ENCODE measurements at regions of chr1 and their contacts with region 1.

Region 1: DNA sequence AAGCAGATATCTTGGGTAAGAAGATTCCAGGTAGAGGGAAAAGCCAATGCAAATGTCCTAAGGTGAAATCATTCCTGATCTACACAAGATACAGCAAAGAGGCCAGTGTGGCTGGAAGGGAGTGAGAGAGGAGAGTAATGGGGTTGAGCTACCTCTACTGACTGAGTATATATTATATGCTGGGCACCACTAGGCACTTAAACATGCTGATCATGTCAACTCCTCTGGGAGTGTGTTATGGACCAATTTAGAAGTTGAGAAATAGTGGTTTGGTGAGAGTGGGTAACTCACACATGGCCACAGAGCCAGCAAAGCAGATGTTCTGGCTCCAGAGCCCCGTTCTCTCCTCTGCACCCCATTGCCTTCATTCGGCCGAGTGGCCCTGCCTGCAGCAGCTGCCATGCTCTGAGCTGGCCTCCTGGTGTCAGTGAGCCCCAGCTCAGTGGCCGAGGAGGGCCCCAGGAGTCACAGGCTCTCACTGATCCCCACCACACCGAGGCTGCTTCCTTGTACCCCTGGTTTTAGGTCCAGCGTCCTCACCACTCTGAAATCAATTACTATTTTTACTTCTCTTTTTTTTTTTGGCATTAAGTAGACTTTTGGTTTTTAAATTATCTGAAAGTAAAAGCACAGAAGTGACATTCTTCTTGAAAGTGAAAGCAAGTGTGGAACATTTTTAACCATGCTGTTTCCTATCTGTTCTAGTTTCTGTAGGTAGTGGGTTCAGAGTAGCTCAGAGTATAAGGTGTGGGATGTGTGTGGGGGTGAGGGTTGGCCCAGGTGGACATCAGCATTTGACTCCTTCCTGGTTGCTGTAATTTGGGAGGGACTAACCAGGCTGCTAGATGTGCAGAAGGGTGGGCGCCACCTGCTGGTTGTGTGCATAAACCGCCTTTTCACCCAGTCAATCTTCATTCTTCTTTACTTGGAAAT is 45.8 kb upstream of the CRNN start:
- DNase-seq: peak; percentile 29 to 88 (median 63)
- ATAC-seq: peak; percentile 53 to 76 (median 64)
- H3K4me3 ChIP-seq: peak overlapping the region in 1 of 2 donors; percentile 12
- H3K4me3 Mint-ChIP-seq: peak overlapping the region; percentile 43 to 74 (median 62)
- H3K27ac ChIP-seq: peak overlapping the region; percentile 70
- H3K27ac Mint-ChIP-seq: peak overlapping the region; percentile 83 to 94
- H3K4me1 ChIP-seq: peaks cover 4 to 14% of the 10 kb centered on the region in 2 experiments
- H3K4me1 Mint-ChIP-seq: peaks cover 26 to 28% (median 27%) of the 10 kb centered on the region in 3 donors
- H3K27me3 ChIP-seq: no peaks in the 10 kb centered on the region
- H3K27me3 Mint-ChIP-seq: peaks cover 0 to 4% of the 10 kb centered on the region in 2 donors

Region 2: DNA sequence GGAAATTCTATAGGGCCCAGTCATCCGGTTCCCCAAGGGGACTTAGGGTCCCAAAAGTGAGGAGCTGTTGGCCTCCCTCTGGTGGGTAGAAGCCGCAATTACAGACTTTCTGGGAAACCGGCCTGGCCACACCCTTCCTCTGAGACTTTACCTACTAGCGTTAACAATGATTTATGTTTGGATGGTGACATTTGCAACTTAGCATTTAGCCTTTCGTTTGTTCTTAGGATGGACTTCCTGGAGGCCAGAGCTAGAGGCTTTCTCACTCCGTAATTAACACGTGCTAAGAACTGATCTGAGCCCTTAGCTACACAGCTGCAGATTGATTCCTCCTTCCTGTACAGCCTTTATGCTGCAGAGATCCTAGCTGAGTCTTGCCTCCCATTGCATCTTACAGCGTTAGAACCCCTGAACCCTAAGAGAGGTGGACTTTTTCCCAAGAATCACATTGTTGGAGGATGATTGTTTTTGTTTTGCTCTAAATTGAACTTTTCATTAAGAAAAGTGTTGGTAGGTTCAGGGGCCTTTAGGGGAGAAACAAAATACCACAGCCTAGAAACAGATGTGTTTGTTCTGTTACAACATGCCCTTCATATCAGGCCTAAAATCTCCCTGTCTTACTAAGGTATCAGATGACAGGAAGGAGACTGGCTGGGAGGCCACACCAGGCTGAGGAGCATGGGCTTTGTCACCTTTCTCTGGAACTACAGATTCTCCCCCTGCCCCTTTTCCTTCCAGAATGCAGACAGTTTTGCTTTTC is 425.0 kb before region 1 on chr1:
- CTCF ChIA-PET with region 1: interaction called in 1 of 2 experiments, 21 read pairs
- POLR2A ChIA-PET with region 1: no interaction called
- DNase-seq: peak; percentile 21 to 81 (median 44)
- ATAC-seq: peak; percentile 79 to 91 (median 81)
- H3K4me3 ChIP-seq: peak overlapping the region; percentile 89 to 90
- H3K4me3 Mint-ChIP-seq: peak overlapping the region; percentile 97 to 99 (median 97)
- H3K27ac ChIP-seq: peak overlapping the region; percentile 82
- H3K27ac Mint-ChIP-seq: peak overlapping the region; percentile 98 to 99
- H3K4me1 ChIP-seq: peaks cover 15 to 45% of the 10 kb centered on the region in 2 experiments
- H3K4me1 Mint-ChIP-seq: peaks cover 49 to 58% (median 54%) of the 10 kb centered on the region in 3 donors
- H3K27me3 ChIP-seq: no peaks in the 10 kb centered on the region
- H3K27me3 Mint-ChIP-seq: no peaks in the 10 kb centered on the region

Region 3: GRCh38 chr1:152189657-152190442 is 270.0 kb before region 1 on chr1:
- CTCF ChIA-PET with region 1: interaction called, 15 to 134 read pairs
- POLR2A ChIA-PET with region 1: no interaction called
- DNase-seq: peak; percentile 22 to 81 (median 58)
- ATAC-seq: peak; percentile 65 to 71 (median 68)
- H3K4me3 ChIP-seq: peak overlapping the region; percentile 67 to 69
- H3K4me3 Mint-ChIP-seq: peak overlapping the region; percentile 72 to 85 (median 79)
- H3K27ac ChIP-seq: no peak overlapping the region
- H3K27ac Mint-ChIP-seq: no peak overlapping the region
- H3K4me1 ChIP-seq: peaks cover 0 to 13% of the 10 kb centered on the region in 2 experiments
- H3K4me1 Mint-ChIP-seq: peaks cover 0 to 9% (median 6%) of the 10 kb centered on the region in 3 donors
- H3K27me3 ChIP-seq: peaks cover 3 to 8% of the 10 kb centered on the region in 2 experiments
- H3K27me3 Mint-ChIP-seq: no peaks in the 10 kb centered on the region

Region 4: DNA sequence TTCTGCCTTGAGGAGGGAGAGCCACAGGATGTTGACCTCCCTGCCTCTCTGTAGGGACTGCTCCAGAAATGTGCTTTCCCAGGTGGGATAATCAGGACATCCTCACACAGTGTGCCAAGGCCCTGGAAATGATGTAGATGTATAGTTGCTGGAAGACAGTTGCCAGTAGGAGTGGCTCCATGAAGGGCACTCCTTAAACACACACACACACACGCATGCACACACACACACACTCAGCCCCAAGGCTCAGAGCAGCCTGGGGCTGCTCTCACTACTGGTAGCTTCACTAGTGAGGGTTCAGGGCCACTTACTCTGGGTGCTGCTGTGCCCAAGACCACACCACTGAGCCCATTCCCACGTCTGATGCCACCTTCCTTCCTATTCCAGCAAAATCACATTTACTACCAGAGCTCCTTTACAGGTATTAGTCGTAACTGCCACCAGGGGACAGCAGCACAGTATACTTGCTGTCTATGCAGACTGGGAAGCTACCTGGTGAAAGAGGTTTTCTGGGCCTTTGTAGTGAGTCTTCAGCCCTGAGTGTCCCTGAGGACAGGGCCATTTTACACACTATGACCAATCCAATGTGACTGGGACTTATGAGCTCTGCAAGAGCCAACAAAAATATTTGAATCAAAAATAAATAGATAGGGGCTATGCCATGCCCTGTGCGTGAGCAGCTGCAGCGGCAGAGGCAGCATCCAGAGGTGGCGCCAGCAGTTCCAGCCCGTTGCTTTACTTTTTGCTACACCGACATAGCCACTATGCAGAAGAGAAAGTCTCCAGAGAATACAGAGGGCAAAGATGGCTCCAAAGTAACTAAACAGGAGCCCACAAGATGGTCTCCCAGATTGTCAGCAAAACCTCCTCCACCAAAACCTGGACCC is 60.8 kb before region 1 on chr1:
- CTCF ChIA-PET with region 1: interaction called, 3 to 46 read pairs
- POLR2A ChIA-PET with region 1: no interaction called
- DNase-seq: peak in 9 of 35 experiments; percentile 2 to 46 (median 7)
- ATAC-seq: peak in 2 of 4 experiments; percentile 39 to 40
- H3K4me3 ChIP-seq: no peak overlapping the region
- H3K4me3 Mint-ChIP-seq: no peak overlapping the region
- H3K27ac ChIP-seq: no peak overlapping the region
- H3K27ac Mint-ChIP-seq: peak overlapping the region in 1 of 2 donors; percentile 23
- H3K4me1 ChIP-seq: no peaks in the 10 kb centered on the region
- H3K4me1 Mint-ChIP-seq: peaks cover 0 to 16% (median 14%) of the 10 kb centered on the region in 3 donors
- H3K27me3 ChIP-seq: peaks cover 0 to 3% of the 10 kb centered on the region in 2 experiments
- H3K27me3 Mint-ChIP-seq: peaks cover 11 to 20% of the 10 kb centered on the region in 2 donors

Region 5: DNA sequence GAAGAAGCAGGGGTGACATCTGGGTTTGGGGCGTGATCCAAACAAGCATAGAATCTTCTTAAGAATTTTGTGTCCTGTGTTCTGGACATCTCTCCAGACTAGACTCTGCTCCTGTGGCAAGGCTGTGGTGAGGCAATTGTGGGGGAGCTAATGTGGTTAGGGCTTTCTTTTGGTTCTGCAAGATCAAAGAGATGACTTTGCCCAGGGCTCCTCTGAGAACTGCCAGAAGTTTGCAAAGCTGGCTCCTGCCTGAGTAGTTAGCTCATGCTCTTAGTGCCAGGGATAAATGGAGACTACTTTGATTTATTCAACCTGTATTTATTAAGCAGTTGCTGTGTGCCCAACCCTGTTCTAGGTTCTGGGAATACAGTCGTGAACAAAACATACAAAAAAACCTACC is 11.8 kb before region 1 on chr1:
- CTCF ChIA-PET with region 1: interaction called, 3 to 41 read pairs
- POLR2A ChIA-PET with region 1: no interaction called
- DNase-seq: no peak
- ATAC-seq: no peak
- H3K4me3 ChIP-seq: no peak overlapping the region
- H3K4me3 Mint-ChIP-seq: no peak overlapping the region
- H3K27ac ChIP-seq: no peak overlapping the region
- H3K27ac Mint-ChIP-seq: no peak overlapping the region
- H3K4me1 ChIP-seq: no peaks in the 10 kb centered on the region
- H3K4me1 Mint-ChIP-seq: peaks cover 0 to under 1% (median 0%) of the 10 kb centered on the region in 3 donors
- H3K27me3 ChIP-seq: peaks cover 2 to 7% of the 10 kb centered on the region in 2 experiments
- H3K27me3 Mint-ChIP-seq: peaks cover 0 to 4% of the 10 kb centered on the region in 2 donors

Measured in T-cell (primary cell).